ENCODE measurements at regions of chr7 and their contacts with region 1.

Region 1: DNA sequence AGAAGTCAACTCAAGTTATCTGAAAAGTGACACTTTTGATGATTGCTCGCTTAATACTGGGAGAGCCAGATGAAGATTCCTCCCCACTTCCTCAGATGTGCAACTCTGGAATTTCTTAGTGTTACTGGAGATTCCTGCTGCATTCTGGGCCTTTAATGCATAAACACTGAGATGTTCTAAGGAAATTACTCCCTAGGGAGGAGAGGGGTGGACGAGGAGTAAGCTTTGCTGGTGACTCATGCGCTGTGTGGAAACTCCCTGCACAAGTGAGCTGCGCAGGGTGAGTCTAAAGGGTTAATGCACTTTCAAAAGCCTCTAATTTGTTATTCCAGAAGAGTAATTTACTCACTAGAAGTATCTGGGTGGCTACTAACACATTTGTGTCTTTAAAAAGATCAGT is 46.3 kb downstream of the EGFR start:
- DNase-seq: peak; percentile 95
- H3K4me3 Mint-ChIP-seq: peak overlapping the region; percentile 63
- H3K27ac Mint-ChIP-seq: peak overlapping the region; percentile 93
- H3K4me1 Mint-ChIP-seq: peaks cover 81% of the 10 kb centered on the region
- H3K27me3 Mint-ChIP-seq: no peaks in the 10 kb centered on the region
- CTCF ChIP-seq: no peak

Region 2: GRCh38 chr7:55053651-55054571 is 11.2 kb before region 1 on chr7:
- CTCF ChIA-PET with region 1: interaction called, 9 read pairs
- POLR2A ChIA-PET with region 1: interaction called, 33 read pairs
- intact Hi-C with region 1: loop called (anchors 1 kb)
- DNase-seq: peak; percentile 57
- H3K4me3 Mint-ChIP-seq: peak overlapping the region; percentile 58
- H3K27ac Mint-ChIP-seq: peak overlapping the region; percentile 95
- H3K4me1 Mint-ChIP-seq: peaks cover 80% of the 10 kb centered on the region
- H3K27me3 Mint-ChIP-seq: no peaks in the 10 kb centered on the region
- CTCF ChIP-seq: no peak

Region 3: GRCh38 chr7:55086413-55087201 is 21.5 kb after region 1 on chr7:
- CTCF ChIA-PET with region 1: no interaction called
- POLR2A ChIA-PET with region 1: interaction called, 16 read pairs
- intact Hi-C with region 1: no loop called
- DNase-seq: peak; percentile 78
- H3K4me3 Mint-ChIP-seq: peak overlapping the region; percentile 68
- H3K27ac Mint-ChIP-seq: peak overlapping the region; percentile 54
- H3K4me1 Mint-ChIP-seq: peaks cover 58% of the 10 kb centered on the region
- H3K27me3 Mint-ChIP-seq: no peaks in the 10 kb centered on the region
- CTCF ChIP-seq: no peak

Region 4: GRCh38 chr7:55185941-55186609 is 121.0 kb after region 1 on chr7:
- CTCF ChIA-PET with region 1: no interaction called
- POLR2A ChIA-PET with region 1: no interaction called
- intact Hi-C with region 1: loop called (anchors 5 kb)
- DNase-seq: peak; percentile 97
- H3K4me3 Mint-ChIP-seq: no peak overlapping the region
- H3K27ac Mint-ChIP-seq: peak overlapping the region; percentile 79
- H3K4me1 Mint-ChIP-seq: peaks cover 29% of the 10 kb centered on the region
- H3K27me3 Mint-ChIP-seq: no peaks in the 10 kb centered on the region
- CTCF ChIP-seq: no peak